Thyroid gland (tissue), 4 donors: ENCODE measurements at regions of chrX and their contacts with region 1.

Region 1: GRCh38 chrX:23694606-23695005 is 27.3 kb downstream of the PRDX4 start:
- DNase-seq: peak; percentile 53 to 70
- H3K4me3 ChIP-seq: no peak overlapping the region
- H3K27ac ChIP-seq: no peak overlapping the region
- H3K4me1 ChIP-seq: no peaks in the 10 kb centered on the region
- H3K27me3 ChIP-seq: no peaks in the 10 kb centered on the region
- CTCF ChIP-seq: peak in 3 of 6 experiments; percentile 24 to 54 (median 35)
- POLR2A ChIP-seq: no peak

Region 2: DNA sequence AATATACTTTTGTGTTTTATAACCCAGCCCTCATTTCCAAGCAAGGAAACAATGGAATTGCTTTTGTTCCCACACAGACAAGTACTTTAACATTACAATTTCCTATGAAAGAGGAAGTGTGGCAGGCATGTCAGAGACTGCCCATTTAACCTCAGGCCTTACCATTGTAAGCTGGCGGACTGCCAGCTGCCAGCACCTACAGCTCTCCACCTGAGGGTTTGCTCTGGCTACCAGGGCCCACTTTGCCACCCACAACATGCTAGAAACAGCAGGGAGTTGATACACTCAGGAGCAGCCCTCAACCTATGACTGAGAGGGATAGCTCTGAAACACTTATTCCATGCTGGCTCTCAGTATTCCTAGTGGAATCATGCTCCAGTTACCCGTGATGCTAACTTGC is 179.6 kb before region 1 on chrX:
- intact Hi-C with region 1: no loop called
- DNase-seq: no peak
- H3K4me3 ChIP-seq: no peak overlapping the region
- H3K27ac ChIP-seq: no peak overlapping the region
- H3K4me1 ChIP-seq: no peaks in the 10 kb centered on the region
- H3K27me3 ChIP-seq: no peaks in the 10 kb centered on the region
- CTCF ChIP-seq: no peak
- POLR2A ChIP-seq: no peak

Region 3: GRCh38 chrX:23901805-23902204 is 207.2 kb after region 1 on chrX:
- intact Hi-C with region 1: loop called (anchors 5 kb)
- DNase-seq: peak; percentile 51 to 57
- H3K4me3 ChIP-seq: no peak overlapping the region
- H3K27ac ChIP-seq: peak overlapping the region; percentile 55 to 66 (median 57)
- H3K4me1 ChIP-seq: peaks cover 5 to 38% of the 10 kb centered on the region in 2 donors
- H3K27me3 ChIP-seq: no peaks in the 10 kb centered on the region
- CTCF ChIP-seq: peak in 5 of 6 experiments; percentile 15 to 79 (median 65)
- POLR2A ChIP-seq: no peak